ENCODE measurements at regions of chr5 and their contacts with region 1.

Region 1: GRCh38 chr5:103562453-103563157 is at the start of gene NUDT12:
- DNase-seq: peak; percentile 63 to 83 (median 74)
- ATAC-seq: peak; percentile 92 to 97 (median 94)
- H3K4me3 ChIP-seq: peak within 1 kb of the TSS; percentile 48 to 89 (median 73)
- H3K27ac ChIP-seq: peak within 1 kb of the TSS; percentile 63 to 95 (median 86)
- H3K4me1 ChIP-seq: peaks cover 0 to 14% (median 5%) of the 10 kb centered on the region in 12 donors
- H3K27me3 ChIP-seq: no peaks in the 10 kb centered on the region
- CTCF ChIP-seq: no peak
- POLR2A ChIP-seq: peak in 1 of 2 donors; percentile 38
- total RNA-seq, gene NUDT12: 10.3 to 14.5 (median 11.8) TPM

Region 2: GRCh38 chr5:103258368-103258956 is 304.1 kb before region 1 on chr5 and contains the start of gene MACIR:
- intact Hi-C with region 1: loop called in 1 of 10 experiments (anchors 10 kb)
- DNase-seq: peak; percentile 95 to 99 (median 98)
- ATAC-seq: peak; percentile 98 to 99 (median 98)
- H3K4me3 ChIP-seq: peak within 1 kb of the TSS; percentile 63 to 96 (median 92)
- H3K27ac ChIP-seq: peak within 1 kb of the TSS; percentile 76 to 93 (median 84)
- H3K4me1 ChIP-seq: peaks cover 0 to 42% (median 29%) of the 10 kb centered on the region in 12 donors
- H3K27me3 ChIP-seq: no peaks in the 10 kb centered on the region
- CTCF ChIP-seq: peak in 4 of 12 donors; percentile 16 to 37 (median 22)
- POLR2A ChIP-seq: peak in 1 of 2 donors; percentile 85
- total RNA-seq, gene MACIR: 2.7 to 6.0 (median 4.6) TPM

Region 3: GRCh38 chr5:103724271-103724670 is 161.7 kb after region 1 on chr5:
- intact Hi-C with region 1: no loop called
- DNase-seq: no peak
- ATAC-seq: no peak
- H3K4me3 ChIP-seq: no peak overlapping the region
- H3K27ac ChIP-seq: no peak overlapping the region
- H3K4me1 ChIP-seq: no peaks in the 10 kb centered on the region
- H3K27me3 ChIP-seq: no peaks in the 10 kb centered on the region
- CTCF ChIP-seq: no peak
- POLR2A ChIP-seq: no peak